ENCODE measurements at regions of chr1 and their contacts with region 1.

Region 1: GRCh38 chr1:110235834-110236682 is 25.9 kb downstream of the KCNC4 start:
- DNase-seq: no peak
- H3K4me3 Mint-ChIP-seq: peak overlapping the region; percentile 74
- H3K27ac Mint-ChIP-seq: peak overlapping the region; percentile 93
- H3K4me1 Mint-ChIP-seq: peaks cover 39% of the 10 kb centered on the region
- H3K27me3 Mint-ChIP-seq: no peaks in the 10 kb centered on the region

Region 2: DNA sequence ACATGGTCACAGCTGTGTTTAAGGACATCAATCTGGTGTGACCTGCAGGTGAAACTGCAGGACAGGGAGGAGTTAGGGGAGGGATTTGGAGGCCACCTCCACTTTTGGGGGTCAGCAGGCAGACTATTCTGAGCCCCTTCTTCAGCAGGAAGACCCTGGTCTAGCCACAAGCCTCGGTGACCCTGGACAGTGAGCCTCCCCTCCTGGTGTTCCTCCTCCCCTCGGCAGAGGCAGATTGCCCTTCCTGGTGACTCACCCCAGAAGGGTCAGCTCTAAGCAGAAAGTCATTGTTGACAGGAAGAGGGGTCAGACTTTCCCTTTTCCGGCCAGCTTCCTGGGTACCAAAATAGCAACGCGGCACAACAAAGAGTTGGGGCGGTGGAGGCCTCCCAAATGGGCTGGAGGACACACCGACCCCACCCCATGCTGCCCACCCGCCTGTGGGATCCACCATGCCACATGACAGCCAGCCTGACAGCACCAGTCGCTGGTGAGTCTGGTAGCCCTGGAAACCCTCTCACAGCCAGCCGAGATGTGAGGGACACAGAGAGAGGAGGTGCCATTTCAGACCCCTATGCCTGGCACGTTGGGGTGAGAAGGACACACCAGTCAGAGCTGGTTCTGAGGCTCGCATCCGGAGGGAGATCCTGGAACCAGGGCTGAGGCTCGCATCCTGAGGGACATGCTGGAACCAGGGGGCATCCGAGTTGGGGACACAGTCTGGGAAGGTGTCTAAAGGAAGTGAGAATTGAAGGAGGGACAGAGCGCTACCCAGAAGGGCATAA is 340.1 kb before region 1 on chr1:
- intact Hi-C with region 1: loop called (anchors 5 kb)
- DNase-seq: peak; percentile 77
- H3K4me3 Mint-ChIP-seq: no peak overlapping the region
- H3K27ac Mint-ChIP-seq: no peak overlapping the region
- H3K4me1 Mint-ChIP-seq: peaks cover 27% of the 10 kb centered on the region
- H3K27me3 Mint-ChIP-seq: no peaks in the 10 kb centered on the region

Region 3: DNA sequence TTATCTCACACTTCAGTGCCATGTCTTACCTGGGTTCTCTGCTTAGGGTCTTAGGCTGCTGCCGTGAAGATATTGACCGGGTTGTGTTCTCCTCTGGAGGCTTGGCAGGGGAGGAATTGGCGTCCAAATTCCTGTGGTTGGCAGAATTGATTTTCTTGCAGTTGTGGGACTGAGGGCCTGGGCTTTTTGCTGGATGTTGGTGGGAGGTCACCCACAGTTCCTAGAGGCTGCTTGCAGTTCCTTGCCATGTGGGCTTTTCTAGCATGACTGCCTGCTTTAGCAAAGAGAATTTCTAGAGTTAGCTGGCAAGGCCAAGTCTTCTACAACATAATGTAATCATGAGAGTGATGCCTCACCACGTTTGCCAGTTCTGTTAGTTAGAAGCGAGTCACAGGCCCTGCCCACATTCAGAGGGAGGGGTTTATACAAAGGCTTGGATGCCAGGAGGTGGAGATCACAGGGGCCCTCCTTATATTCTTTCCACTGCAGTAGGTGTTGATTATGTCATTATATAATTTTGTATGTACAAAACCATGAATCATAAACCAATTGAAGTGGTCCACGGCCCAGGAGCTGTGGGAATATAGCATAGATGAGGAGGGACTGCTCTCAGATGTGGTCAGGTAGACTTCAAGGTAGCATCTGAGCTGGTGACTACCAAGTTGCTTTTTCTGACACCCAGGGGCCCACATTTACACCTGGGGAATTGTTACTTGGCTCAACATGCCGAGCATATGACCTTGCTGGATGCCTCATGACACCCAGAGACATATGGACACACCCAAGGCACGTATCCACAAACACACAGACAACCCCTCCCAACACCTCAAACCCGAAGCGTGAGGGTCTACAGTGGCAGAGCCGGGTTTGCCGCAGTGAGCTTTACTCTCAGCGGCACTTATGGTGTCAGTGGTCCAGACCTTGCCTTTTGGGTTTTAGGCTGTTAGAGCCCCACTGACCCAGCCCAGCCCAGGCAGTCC is 117.1 kb before region 1 on chr1:
- intact Hi-C with region 1: no loop called
- DNase-seq: no peak
- H3K4me3 Mint-ChIP-seq: no peak overlapping the region
- H3K27ac Mint-ChIP-seq: no peak overlapping the region
- H3K4me1 Mint-ChIP-seq: peaks cover 2% of the 10 kb centered on the region
- H3K27me3 Mint-ChIP-seq: peaks cover 14% of the 10 kb centered on the region

Region 4: GRCh38 chr1:110216844-110217444 is 19.1 kb before region 1 on chr1:
- intact Hi-C with region 1: loop called (anchors 1 kb)
- DNase-seq: no peak
- H3K4me3 Mint-ChIP-seq: peak overlapping the region; percentile 8
- H3K27ac Mint-ChIP-seq: no peak overlapping the region
- H3K4me1 Mint-ChIP-seq: peaks cover 37% of the 10 kb centered on the region
- H3K27me3 Mint-ChIP-seq: peaks cover 6% of the 10 kb centered on the region

Region 5: GRCh38 chr1:110554871-110555801 is 319.1 kb after region 1 on chr1:
- intact Hi-C with region 1: no loop called
- DNase-seq: peak; percentile 86
- H3K4me3 Mint-ChIP-seq: no peak overlapping the region
- H3K27ac Mint-ChIP-seq: no peak overlapping the region
- H3K4me1 Mint-ChIP-seq: no peaks in the 10 kb centered on the region
- H3K27me3 Mint-ChIP-seq: peaks cover 67% of the 10 kb centered on the region

Region 6: GRCh38 chr1:110872745-110873720 is 637.0 kb after region 1 on chr1 and contains the start of gene CD53:
- intact Hi-C with region 1: loop called (anchors 10 kb)
- DNase-seq: peak; percentile 87
- H3K4me3 Mint-ChIP-seq: peak within 1 kb of the TSS; percentile 98
- H3K27ac Mint-ChIP-seq: peak within 1 kb of the TSS; percentile 97
- H3K4me1 Mint-ChIP-seq: peaks cover 34% of the 10 kb centered on the region
- H3K27me3 Mint-ChIP-seq: no peaks in the 10 kb centered on the region
- total RNA-seq, gene CD53: 185 and 190 TPM in 2 replicates

Measured in activated CD4-positive, alpha-beta T cell treated with anti-CD3 and anti-CD28 coated beads, Interleukin-2, amount 10 ng/mL, durations not matched to agents 24 days and 14 days (primary cell).